ENCODE measurements at regions of chr3 and their contacts with region 1.

Region 1: DNA sequence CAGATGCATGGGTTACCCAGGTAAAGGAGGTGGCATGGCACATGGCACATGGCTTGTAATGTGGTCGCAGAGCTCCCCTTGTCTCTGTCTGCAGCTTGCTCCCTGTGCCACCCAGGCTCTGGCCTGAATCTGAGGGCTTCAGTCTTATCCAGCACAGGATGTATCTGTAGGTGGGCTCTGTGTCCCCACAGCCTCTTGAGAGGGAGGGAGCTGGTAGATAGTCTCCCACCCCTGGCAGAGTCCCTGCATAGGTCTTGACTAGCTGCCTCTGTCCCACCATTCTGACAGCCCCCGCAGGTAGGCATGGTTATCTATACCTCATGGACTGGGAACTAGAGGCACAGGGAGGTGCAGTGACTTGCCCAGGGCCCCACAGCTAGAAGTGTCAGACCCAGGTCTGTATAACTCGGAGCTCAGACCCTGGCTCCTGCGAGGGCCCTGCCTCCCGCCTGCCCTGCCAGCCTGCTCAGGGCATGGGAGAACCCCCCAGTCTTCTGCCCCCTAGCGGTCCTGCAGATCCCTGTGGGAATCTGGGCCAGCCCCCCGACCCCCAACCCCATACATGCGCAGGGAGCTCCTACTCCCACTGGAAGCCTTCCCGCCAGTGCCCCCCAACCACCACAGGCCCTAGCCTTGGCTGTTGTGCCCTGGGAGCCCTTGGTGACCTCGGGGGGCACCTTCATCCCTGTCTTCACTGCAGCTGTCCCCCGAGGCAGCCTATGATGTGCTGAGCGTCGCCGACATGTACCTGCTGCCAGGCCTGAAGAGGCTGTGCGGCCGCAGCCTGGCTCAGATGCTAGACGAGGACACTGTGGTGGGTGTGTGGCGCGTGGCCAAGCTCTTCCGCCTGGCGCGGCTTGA is 6.8 kb downstream of the ABTB1 start:
- DNase-seq: no peak
- CTCF ChIP-seq: no peak

Region 2: DNA sequence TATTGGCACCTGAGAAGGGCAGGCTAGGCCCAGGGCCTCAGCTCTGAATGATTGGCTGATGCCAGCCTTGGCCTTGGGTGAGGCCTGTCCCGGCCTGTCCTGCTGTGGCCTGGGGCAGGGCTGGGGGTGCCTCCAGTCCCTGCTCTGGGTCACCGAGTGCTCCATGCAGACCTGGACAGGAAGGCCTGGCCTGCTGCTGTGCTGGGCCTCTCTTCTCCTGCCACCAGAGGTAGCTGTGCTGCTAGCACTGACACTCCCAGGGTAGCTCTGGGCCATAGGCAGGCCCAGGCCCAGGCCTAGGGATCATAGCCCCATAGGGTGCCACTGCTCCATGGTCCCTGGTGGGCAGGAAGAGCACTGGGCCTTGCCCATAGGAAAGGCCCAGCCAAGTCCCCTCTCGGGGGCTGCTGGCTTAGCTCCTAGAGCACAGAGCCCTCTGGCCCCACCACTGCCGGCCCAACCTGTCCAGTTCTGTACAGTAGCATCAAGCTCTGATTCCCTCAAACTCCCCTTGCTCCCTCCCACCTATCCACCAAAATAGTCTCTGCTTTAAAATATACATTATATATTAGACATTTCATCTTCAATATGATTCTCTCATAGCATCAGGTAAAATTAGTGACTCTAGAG is 11.4 kb after region 1 on chr3:
- CTCF ChIA-PET with region 1: interaction called, 22 read pairs
- POLR2A ChIA-PET with region 1: no interaction called
- DNase-seq: no peak
- CTCF ChIP-seq: peak; percentile 63

Region 3: GRCh38 chr3:127697551-127698240 is 18.2 kb after region 1 on chr3:
- CTCF ChIA-PET with region 1: interaction called, 22 read pairs
- POLR2A ChIA-PET with region 1: no interaction called
- DNase-seq: peak; percentile 70
- CTCF ChIP-seq: no peak